Calu3 (cell line): ENCODE measurements at regions of chr20 and their contacts with region 1.

Region 1: DNA sequence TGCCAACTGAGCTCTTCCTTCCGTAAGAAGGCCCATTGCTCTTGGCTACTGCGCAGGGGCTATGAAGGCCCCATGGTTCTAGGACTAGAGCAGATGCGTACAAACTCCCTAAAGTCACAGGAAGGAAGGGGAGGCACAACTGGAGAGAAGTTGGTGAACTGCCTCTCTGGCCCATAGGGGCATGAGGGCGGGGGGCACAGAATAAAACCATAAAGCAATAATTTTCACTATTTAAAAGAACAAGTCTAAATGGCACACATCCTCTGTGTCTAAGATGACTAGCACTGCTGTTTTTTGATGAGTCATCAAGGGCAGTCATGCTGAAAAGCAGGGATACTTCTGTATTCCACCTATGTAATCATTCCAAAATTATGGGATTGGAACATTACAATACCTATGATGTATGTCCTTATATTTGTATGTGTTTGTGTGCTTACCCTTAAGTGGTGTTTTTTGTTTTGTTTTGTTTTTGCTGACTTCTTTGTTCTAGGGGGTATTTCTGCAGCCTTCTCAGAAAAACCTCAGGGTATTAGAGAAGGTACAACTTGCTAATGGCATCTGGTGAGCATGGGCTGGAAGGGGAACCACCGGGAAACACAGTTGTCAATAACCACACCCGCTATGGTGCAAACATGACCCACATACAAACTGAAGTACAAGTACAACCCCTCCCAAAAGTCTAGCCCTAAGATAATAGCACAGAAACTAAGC is 36.9 kb downstream of the B4GALT5 start:
- DNase-seq: no peak
- H3K4me3 Mint-ChIP-seq: no peak overlapping the region
- H3K27ac Mint-ChIP-seq: peak overlapping the region; percentile 57
- H3K4me1 Mint-ChIP-seq: peaks cover 98% of the 10 kb centered on the region
- H3K27me3 Mint-ChIP-seq: no peaks in the 10 kb centered on the region
- CTCF ChIP-seq: no peak

Region 2: DNA sequence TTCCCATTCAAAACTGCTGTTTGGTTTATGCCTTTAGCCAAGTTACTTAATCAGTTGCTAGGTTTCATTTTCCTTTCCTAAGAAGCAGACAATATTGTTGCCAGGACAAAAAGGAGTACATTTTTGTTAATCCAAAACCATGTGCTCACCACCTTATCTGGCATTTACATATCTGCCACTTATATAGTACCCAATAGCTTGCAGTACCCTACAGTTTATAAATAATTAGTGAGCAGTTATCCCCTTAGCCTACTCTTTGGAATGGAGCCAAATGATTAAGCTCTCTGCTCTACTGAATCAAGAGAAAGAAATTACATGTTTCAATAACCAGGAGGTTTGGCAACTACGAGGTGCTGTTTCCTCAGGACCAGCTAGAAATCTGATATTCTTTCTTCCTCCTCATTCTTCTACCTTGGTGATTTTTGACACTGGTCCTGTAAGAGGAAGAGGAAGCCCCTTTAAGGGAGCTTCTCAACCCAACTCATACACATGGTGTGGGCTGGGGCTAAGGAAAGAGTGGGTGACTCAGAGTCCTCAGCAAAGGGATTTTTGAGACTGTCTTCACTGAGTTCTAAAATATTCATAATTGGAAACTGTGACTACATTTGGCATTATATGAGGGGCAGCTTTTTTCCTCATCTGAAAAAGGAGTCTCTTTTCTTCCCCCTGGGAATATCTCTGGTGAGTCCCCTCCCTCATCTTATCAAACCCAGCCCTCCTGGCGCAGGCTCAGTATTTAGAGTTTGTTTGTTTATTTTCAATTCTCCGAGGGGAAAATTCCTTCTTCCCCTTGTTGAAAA is 400.4 kb before region 1 on chr20:
- CTCF ChIA-PET with region 1: no interaction called
- intact Hi-C with region 1: no loop called
- DNase-seq: peak; percentile 42
- H3K4me3 Mint-ChIP-seq: peak overlapping the region; percentile 82
- H3K27ac Mint-ChIP-seq: peak overlapping the region; percentile 95
- H3K4me1 Mint-ChIP-seq: peaks cover 34% of the 10 kb centered on the region
- H3K27me3 Mint-ChIP-seq: no peaks in the 10 kb centered on the region
- CTCF ChIP-seq: no peak

Region 3: GRCh38 chr20:49516916-49517789 is 159.6 kb before region 1 on chr20:
- CTCF ChIA-PET with region 1: no interaction called
- intact Hi-C with region 1: no loop called
- DNase-seq: no peak
- H3K4me3 Mint-ChIP-seq: no peak overlapping the region
- H3K27ac Mint-ChIP-seq: no peak overlapping the region
- H3K4me1 Mint-ChIP-seq: no peaks in the 10 kb centered on the region
- H3K27me3 Mint-ChIP-seq: peaks cover 52% of the 10 kb centered on the region
- CTCF ChIP-seq: no peak

Region 4: DNA sequence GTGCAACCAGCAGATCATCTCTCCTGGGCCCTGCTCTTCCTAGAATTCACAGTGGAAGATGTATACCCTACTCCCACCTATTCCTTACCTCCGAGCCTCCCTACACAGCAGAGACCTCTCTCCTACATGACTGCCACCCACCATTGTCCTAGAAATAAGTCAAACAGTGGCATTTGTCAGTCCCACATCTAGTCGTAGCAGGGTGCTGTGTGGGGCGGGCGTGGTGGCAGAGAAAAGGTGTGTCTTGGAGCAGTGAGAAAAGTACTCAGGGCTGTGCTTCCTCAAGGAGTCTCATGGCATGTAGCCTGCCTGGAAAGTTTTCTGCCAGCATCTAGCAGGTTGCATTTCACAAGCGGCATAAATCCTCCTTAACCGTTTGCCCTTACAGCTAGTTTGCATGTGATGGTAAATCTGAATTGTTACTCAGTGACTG is 49.4 kb before region 1 on chr20:
- CTCF ChIA-PET with region 1: no interaction called
- intact Hi-C with region 1: loop called (anchors 5 kb)
- DNase-seq: peak; percentile 45
- H3K4me3 Mint-ChIP-seq: no peak overlapping the region
- H3K27ac Mint-ChIP-seq: no peak overlapping the region
- H3K4me1 Mint-ChIP-seq: peaks cover 30% of the 10 kb centered on the region
- H3K27me3 Mint-ChIP-seq: peaks cover under 1% of the 10 kb centered on the region
- CTCF ChIP-seq: no peak

Region 5: GRCh38 chr20:49641683-49642656 is 34.8 kb before region 1 on chr20:
- CTCF ChIA-PET with region 1: no interaction called
- intact Hi-C with region 1: loop called (anchors 5 kb)
- DNase-seq: peak; percentile 56
- H3K4me3 Mint-ChIP-seq: no peak overlapping the region
- H3K27ac Mint-ChIP-seq: peak overlapping the region; percentile 37
- H3K4me1 Mint-ChIP-seq: peaks cover 19% of the 10 kb centered on the region
- H3K27me3 Mint-ChIP-seq: no peaks in the 10 kb centered on the region
- CTCF ChIP-seq: no peak

Region 6: GRCh38 chr20:49690899-49691620 is 14.3 kb after region 1 on chr20:
- CTCF ChIA-PET with region 1: interaction called, 23 read pairs
- intact Hi-C with region 1: loop called (anchors 1 kb)
- DNase-seq: peak; percentile 83
- H3K4me3 Mint-ChIP-seq: peak overlapping the region; percentile 18
- H3K27ac Mint-ChIP-seq: peak overlapping the region; percentile 84
- H3K4me1 Mint-ChIP-seq: peaks cover 78% of the 10 kb centered on the region
- H3K27me3 Mint-ChIP-seq: no peaks in the 10 kb centered on the region
- CTCF ChIP-seq: no peak

Region 7: GRCh38 chr20:49713753-49714712 is 37.3 kb after region 1 on chr20 and contains the start of gene B4GALT5:
- CTCF ChIA-PET with region 1: interaction called, 5 read pairs
- intact Hi-C with region 1: loop called (anchors 5 kb)
- DNase-seq: peak; percentile 87
- H3K4me3 Mint-ChIP-seq: peak within 1 kb of the TSS; percentile 92
- H3K27ac Mint-ChIP-seq: peak within 1 kb of the TSS; percentile 89
- H3K4me1 Mint-ChIP-seq: peaks cover 47% of the 10 kb centered on the region
- H3K27me3 Mint-ChIP-seq: no peaks in the 10 kb centered on the region
- CTCF ChIP-seq: no peak
- total RNA-seq, gene B4GALT5: 117 and 131 TPM in 2 replicates